ENCODE measurements at regions of chr6 and their contacts with region 1.

Region 1: GRCh38 chr6:136226027-136226673 is 24.0 kb downstream of the MTFR2 start:
- DNase-seq: peak; percentile 64
- H3K27ac ChIP-seq: no peak overlapping the region
- CTCF ChIP-seq: peak; percentile 100

Region 2: DNA sequence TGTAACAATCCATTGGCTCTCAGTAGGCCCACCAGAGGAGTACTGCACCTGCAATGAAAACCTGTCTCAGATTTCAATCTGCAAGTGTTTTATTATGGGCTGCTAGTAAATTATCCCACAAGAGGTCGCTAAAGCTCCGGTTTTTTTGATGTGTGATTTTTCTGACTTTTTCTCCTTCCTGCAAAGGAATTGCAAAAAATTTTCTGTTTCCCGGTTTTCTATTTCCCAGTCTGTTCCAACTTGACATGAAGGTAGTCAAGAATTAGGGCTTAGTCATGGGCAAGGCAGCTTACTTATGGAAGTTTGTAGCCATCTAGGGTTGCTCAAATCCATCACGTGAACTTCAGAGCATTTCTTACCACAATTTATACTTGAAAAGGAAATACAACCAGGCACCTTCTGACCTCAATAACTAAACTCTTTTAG is 690.1 kb before region 1 on chr6:
- CTCF ChIA-PET with region 1: interaction called, 18 read pairs
- POLR2A ChIA-PET with region 1: no interaction called
- DNase-seq: peak; percentile 41
- H3K27ac ChIP-seq: no peak overlapping the region
- CTCF ChIP-seq: peak; percentile 74

Region 3: DNA sequence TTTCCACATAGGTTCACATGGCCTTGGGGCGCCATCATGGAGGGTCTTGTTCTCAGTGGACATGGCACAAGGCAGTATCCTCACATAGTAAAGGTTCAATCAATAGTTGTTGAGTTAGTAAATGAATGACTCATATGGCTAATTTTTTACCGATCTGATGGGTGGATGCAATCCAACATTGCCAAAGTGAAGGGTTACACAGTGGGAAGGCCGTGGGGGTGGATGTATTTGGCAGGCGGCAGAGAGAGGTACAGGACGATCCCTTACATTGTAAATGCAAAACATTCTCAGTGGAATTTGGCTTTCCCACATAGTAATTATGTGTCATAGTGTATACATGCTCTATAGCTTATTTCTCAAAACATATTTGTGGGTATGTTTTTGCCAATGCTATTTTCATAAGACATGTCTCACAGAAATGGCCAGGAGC is 395.7 kb before region 1 on chr6:
- CTCF ChIA-PET with region 1: no interaction called
- POLR2A ChIA-PET with region 1: no interaction called
- DNase-seq: no peak
- H3K27ac ChIP-seq: no peak overlapping the region
- CTCF ChIP-seq: no peak

Region 4: GRCh38 chr6:136191606-136192312 is 34.4 kb before region 1 on chr6:
- CTCF ChIA-PET with region 1: no interaction called
- POLR2A ChIA-PET with region 1: no interaction called
- DNase-seq: no peak
- H3K27ac ChIP-seq: no peak overlapping the region
- CTCF ChIP-seq: no peak

Region 5: DNA sequence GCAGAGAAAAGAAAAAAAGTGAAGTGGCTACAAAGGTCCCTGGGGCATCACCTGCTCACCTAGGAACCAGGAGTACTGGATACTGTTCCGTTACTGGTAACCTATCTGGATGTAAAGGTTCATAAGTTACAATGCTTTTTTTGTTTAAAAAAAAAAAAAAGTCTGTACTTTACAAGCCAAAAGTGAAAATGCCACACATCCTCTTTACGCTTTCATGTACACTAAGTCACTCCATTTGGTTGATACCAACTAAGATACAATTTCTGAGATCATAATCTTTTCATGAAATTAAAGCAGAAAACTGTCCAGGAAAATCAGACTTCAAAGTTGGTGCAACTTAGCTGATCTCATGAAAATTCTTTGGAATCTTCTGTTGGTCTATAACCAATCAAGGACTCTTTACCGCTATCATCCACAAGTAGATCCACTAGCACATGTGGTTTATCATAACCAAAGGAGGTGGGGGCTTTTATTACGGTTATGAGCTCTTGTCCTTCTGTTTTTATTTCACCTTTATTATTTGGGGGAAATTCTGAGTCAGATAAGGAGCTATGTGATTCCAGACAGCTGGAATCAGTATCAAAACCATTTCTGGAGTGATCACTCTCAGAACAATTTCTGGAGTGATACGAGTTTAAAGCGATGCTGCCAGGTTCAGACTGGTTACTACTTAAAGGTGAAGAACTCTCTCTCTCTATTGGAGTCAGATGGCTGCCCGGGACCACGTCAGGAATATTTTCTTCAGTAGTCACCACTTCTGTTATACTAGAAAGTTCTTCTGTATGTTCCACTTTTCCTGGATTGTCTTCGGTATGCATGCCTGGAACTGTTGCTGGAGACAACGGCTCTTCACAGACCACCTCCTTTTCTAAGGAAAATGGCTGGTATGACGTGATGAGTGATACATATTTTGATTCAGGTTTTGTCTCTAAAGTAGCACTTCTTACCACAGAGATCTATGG is 971.8 kb after region 1 on chr6:
- CTCF ChIA-PET with region 1: interaction called, 10 read pairs
- POLR2A ChIA-PET with region 1: no interaction called
- DNase-seq: no peak
- H3K27ac ChIP-seq: no peak overlapping the region
- CTCF ChIP-seq: no peak